Activated CD4-positive, alpha-beta T cell treated with anti-CD3 and anti-CD28 coated beads, Interleukin-2, amount 10 ng/mL, durations not matched to agents 24 days and 14 days (primary cell): ENCODE measurements at regions of chr1 and their contacts with region 1.

Region 1: GRCh38 chr1:206766251-206766856 is 4.2 kb upstream of the IL19 start:
- DNase-seq: peak; percentile 91
- H3K4me3 Mint-ChIP-seq: peak overlapping the region; percentile 74
- H3K27ac Mint-ChIP-seq: peak overlapping the region; percentile 80
- H3K4me1 Mint-ChIP-seq: peaks cover 56% of the 10 kb centered on the region
- H3K27me3 Mint-ChIP-seq: peaks cover 27% of the 10 kb centered on the region

Region 2: DNA sequence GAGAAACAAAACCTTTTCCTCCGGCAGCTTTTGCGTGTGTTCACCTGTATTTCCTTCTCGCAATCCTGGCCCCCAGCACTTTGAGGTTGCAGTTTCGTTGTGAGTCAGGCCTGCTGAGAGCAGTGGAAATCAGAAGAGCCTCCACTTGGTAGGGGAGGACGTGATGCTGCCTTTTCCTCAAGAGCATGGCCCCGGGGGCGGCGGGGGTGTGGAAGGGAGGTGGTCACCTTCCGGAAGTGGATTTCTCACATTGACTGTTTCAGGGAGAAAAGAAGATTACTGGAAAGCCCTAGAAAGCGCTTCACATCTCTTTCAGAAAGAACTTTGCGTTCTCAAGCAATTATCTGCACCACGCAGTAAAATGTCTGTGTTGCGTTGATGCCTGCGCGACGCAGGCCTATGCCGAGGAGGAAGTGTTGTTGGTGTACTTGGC is 18.1 kb after region 1 on chr1:
- intact Hi-C with region 1: loop called (anchors 1 kb)
- DNase-seq: peak; percentile 96
- H3K4me3 Mint-ChIP-seq: peak overlapping the region; percentile 52
- H3K27ac Mint-ChIP-seq: peak overlapping the region; percentile 73
- H3K4me1 Mint-ChIP-seq: peaks cover 57% of the 10 kb centered on the region
- H3K27me3 Mint-ChIP-seq: peaks cover 26% of the 10 kb centered on the region